Left cardiac atrium (tissue), 4 donors: ENCODE measurements at regions of chr14 and their contacts with region 1.

Region 1: DNA sequence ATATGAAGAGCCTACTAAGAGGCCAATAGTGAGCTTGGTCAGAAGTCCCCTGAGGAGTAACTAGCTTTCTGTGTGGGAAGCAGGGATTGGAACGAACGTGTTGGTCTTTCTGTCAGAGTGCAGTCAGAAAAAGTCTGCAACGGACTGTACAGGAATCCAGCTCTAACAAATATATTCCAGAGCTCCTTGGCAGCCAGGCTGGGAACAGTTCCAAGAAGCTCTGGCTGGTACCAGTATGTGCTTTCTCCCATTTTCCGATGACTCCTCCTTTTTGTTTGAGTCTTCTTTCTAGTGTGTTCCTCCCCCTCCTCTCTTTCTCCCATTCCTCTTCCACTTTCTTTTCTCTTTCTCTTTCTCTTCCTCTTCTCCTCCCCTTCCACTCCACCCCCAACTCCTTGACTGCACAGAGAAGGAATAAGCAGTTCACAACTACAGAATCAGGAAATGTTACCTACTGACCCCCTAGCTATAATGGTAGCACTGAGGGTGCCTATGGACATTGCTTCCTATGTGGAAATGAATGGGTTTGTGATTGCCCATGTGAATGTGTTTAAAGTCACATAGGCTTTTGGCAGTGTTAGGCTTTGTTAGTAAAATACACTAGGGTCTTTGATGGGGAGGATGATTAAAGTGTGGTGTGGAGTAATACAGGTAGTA is 59.9 kb downstream of the TTLL5 start:
- DNase-seq: peak; percentile 69
- ATAC-seq: peak; percentile 90 to 91

Region 2: DNA sequence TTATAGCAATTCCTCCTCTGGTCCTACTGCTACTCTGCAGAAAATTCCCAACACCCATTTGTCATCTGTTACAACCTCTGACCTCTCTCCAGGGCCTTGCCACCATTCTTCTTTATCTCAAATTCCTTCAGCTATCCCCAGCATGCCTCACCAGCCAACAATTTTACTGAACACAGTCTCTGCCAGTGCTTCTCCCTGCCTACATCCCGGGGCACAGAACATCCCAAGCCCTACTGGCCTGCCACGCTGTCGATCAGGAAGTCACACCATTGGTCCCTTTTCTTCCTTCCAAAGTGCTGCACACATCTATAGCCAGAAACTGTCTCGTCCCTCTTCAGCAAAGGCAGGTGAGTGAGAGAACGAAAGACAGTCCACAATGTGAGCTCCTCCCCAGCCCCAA is 62.2 kb after region 1 on chr14:
- intact Hi-C with region 1: loop called (anchors 5 to 10 kb)
- DNase-seq: no peak
- ATAC-seq: peak; percentile 92 to 94